Lower leg skin (tissue), 4 donors: ENCODE measurements at regions of chr1 and their contacts with region 1.

Region 1: DNA sequence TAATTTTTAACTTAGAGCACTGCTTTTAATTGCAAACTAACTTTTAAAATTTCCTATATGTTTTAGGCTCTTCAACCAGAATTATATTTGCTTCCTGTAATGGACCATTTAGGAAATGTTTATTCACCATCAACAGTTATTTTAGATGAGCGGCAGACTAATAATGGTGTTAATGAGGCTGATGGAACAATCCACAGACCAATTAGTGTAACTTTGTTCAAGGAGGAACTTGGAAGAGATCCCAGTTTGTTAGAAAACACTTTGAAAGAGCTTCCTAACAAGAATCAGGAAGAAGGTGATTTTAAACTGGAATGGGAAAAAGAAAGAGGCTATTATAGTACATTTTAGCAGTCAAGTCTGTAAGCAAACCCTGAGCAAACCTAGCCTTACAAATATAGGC is 19.4 kb upstream of the GNG5 start:
- DNase-seq: no peak
- H3K4me3 ChIP-seq: no peak overlapping the region
- CTCF ChIP-seq: no peak
- POLR2A ChIP-seq: no peak

Region 2: DNA sequence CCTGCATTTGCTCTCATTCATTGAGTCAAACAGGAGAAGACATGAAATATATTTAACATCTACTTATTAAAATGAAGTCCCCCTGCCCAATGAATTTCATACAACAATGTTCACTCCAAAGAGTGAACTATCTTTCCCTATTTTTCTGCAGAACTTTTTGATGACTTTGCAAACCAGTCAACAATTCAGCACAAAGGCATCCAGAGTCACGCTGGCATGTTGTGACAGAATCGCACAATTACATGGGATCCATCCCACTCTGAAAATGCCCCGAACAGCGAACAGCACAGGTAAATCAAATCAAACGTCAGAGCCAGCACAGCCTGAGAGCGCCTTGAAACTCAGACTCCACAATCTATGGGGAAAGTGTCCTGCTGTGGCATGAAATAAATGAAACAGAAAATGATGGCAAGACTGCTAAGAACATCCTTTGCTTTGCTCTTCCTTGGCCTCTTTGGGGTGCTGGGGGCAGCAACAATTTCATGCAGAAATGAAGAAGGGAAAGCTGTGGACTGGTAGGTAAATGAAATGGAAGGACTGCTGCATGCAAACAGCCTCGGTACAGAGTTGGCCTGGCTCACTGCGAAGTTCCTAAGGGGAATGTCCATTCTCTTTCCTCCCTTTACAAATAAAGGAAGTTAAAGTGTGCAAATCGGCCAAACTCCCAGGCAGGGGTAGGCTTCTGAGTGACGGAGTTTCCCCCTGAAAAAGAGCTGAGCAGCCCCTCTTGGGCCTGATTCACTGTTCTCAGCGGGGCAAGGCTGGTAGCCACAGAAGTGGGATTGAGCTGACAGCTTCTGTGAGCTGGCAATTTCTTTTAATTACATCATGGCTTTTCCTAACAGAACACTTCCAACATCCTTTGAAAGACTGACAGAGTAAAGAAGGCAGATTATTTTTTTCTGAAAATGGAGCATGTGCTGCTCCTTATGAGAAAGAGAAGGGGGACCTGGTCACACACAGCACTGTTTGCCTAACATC is 127.3 kb before region 1 on chr1 and contains the start of gene DNASE2B:
- intact Hi-C with region 1: no loop called
- DNase-seq: no peak
- H3K4me3 ChIP-seq: no peak within 1 kb of the TSS
- CTCF ChIP-seq: no peak
- POLR2A ChIP-seq: no peak
- total RNA-seq, gene DNASE2B: 0.29 to 3.2 TPM in 2 of 4 donors, not detected in the others

Region 3: GRCh38 chr1:84450910-84451309 is 74.9 kb before region 1 on chr1:
- intact Hi-C with region 1: loop called (anchors 2 kb)
- DNase-seq: no peak
- H3K4me3 ChIP-seq: no peak overlapping the region
- CTCF ChIP-seq: no peak
- POLR2A ChIP-seq: no peak